ENCODE measurements at regions of chr13 and their contacts with region 1.

Region 1: DNA sequence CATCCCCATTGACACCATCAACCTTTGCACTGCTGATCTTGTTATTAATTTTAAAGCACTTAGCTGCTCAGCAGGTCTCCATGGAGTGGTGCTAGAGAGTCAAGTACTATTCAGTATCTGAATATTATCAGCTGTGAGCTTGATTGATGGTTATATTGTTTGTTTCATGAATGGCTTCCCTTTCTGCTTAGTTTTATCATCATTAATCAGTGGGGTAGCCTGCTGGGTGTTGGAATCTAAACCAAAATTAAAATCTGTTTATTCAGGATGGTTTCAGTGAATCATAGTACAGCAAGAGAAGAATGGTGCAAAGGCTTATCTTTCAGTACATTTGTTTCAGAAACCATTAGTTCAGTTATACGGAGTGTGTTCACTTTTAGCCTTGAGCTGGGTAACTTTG is 42.5 kb upstream of the SCEL start:
- DNase-seq: peak; percentile 44
- ATAC-seq: peak; percentile 72
- H3K4me3 ChIP-seq: no peak overlapping the region
- H3K4me3 Mint-ChIP-seq: no peak overlapping the region
- H3K27ac ChIP-seq: no peak overlapping the region
- H3K27ac Mint-ChIP-seq: no peak overlapping the region
- H3K4me1 ChIP-seq: no peaks in the 10 kb centered on the region
- H3K4me1 Mint-ChIP-seq: no peaks in the 10 kb centered on the region
- H3K27me3 ChIP-seq: no peaks in the 10 kb centered on the region
- H3K27me3 Mint-ChIP-seq: peaks cover 7% of the 10 kb centered on the region
- CTCF ChIP-seq: peak; percentile 61

Region 2: GRCh38 chr13:77506874-77507273 is 13.9 kb after region 1 on chr13:
- CTCF ChIA-PET with region 1: interaction called, 37 read pairs
- POLR2A ChIA-PET with region 1: interaction called, 3 read pairs
- intact Hi-C with region 1: no loop called
- DNase-seq: no peak
- ATAC-seq: no peak
- H3K4me3 ChIP-seq: no peak overlapping the region
- H3K4me3 Mint-ChIP-seq: no peak overlapping the region
- H3K27ac ChIP-seq: no peak overlapping the region
- H3K27ac Mint-ChIP-seq: no peak overlapping the region
- H3K4me1 ChIP-seq: peaks cover 20 to 22% of the 10 kb centered on the region in 2 donors
- H3K4me1 Mint-ChIP-seq: peaks cover 18% of the 10 kb centered on the region
- H3K27me3 ChIP-seq: peaks cover 0 to 4% (median 2%) of the 10 kb centered on the region in 4 experiments
- H3K27me3 Mint-ChIP-seq: peaks cover 4% of the 10 kb centered on the region
- CTCF ChIP-seq: peak; percentile 10

Region 3: DNA sequence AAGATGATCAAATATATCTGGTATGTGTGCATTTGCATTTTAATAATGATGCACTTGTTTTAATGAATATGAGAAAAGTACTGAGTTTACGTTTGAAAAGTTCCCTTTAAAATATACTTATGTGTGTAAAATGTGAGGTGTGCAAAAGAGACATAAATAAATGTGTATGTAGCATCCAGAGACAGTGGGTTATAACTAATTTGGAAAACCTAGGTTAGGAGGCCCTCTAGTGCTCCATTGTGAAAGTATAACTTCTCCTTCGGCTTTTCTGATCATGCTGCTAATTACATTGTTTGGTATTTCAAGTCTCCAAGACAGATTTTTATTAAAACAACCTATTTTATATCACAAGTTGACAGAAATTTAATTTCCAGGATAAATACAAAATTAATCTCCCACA is 72.7 kb after region 1 on chr13:
- CTCF ChIA-PET with region 1: interaction called, 95 read pairs
- POLR2A ChIA-PET with region 1: no interaction called
- intact Hi-C with region 1: loop called (anchors 1 kb)
- DNase-seq: peak; percentile 48
- ATAC-seq: peak; percentile 51
- H3K4me3 ChIP-seq: no peak overlapping the region
- H3K4me3 Mint-ChIP-seq: no peak overlapping the region
- H3K27ac ChIP-seq: no peak overlapping the region
- H3K27ac Mint-ChIP-seq: no peak overlapping the region
- H3K4me1 ChIP-seq: no peaks in the 10 kb centered on the region
- H3K4me1 Mint-ChIP-seq: no peaks in the 10 kb centered on the region
- H3K27me3 ChIP-seq: no peaks in the 10 kb centered on the region
- H3K27me3 Mint-ChIP-seq: peaks cover 8% of the 10 kb centered on the region
- CTCF ChIP-seq: peak; percentile 72

Region 4: DNA sequence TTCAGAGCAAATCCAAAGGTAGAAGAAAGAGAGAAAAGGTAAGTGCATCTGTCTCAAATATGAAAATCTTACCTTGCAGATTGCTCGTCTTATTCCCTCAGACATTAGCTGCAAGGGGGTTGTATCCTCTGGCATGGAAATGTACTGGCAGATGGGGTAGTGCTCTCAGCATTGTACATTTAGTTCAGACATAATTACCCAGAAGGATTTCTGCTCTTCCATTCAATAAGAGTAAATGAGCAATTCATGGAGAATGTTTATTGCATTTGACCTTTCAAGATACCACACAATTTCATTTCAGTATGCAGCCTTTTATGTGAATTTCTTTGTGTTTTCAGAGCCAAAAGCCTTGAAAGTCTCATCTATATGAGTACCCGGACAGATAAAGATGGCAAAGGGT is 106.4 kb after region 1 on chr13:
- CTCF ChIA-PET with region 1: interaction called, 11 read pairs
- POLR2A ChIA-PET with region 1: no interaction called
- intact Hi-C with region 1: no loop called
- DNase-seq: no peak
- ATAC-seq: no peak
- H3K4me3 ChIP-seq: no peak overlapping the region
- H3K4me3 Mint-ChIP-seq: no peak overlapping the region
- H3K27ac ChIP-seq: no peak overlapping the region
- H3K27ac Mint-ChIP-seq: no peak overlapping the region
- H3K4me1 ChIP-seq: no peaks in the 10 kb centered on the region
- H3K4me1 Mint-ChIP-seq: no peaks in the 10 kb centered on the region
- H3K27me3 ChIP-seq: peaks cover 0 to 3% (median 0%) of the 10 kb centered on the region in 4 experiments
- H3K27me3 Mint-ChIP-seq: peaks cover 9% of the 10 kb centered on the region
- CTCF ChIP-seq: no peak

Region 5: GRCh38 chr13:77751513-77752456 is 258.8 kb after region 1 on chr13:
- CTCF ChIA-PET with region 1: interaction called, 53 read pairs
- POLR2A ChIA-PET with region 1: no interaction called
- intact Hi-C with region 1: loop called (anchors 1 kb)
- DNase-seq: peak; percentile 65
- ATAC-seq: peak; percentile 36
- H3K4me3 ChIP-seq: no peak overlapping the region
- H3K4me3 Mint-ChIP-seq: no peak overlapping the region
- H3K27ac ChIP-seq: no peak overlapping the region
- H3K27ac Mint-ChIP-seq: no peak overlapping the region
- H3K4me1 ChIP-seq: no peaks in the 10 kb centered on the region
- H3K4me1 Mint-ChIP-seq: no peaks in the 10 kb centered on the region
- H3K27me3 ChIP-seq: no peaks in the 10 kb centered on the region
- H3K27me3 Mint-ChIP-seq: no peaks in the 10 kb centered on the region
- CTCF ChIP-seq: peak; percentile 90